ENCODE measurements at regions of chr1 and their contacts with region 1.

Region 1: DNA sequence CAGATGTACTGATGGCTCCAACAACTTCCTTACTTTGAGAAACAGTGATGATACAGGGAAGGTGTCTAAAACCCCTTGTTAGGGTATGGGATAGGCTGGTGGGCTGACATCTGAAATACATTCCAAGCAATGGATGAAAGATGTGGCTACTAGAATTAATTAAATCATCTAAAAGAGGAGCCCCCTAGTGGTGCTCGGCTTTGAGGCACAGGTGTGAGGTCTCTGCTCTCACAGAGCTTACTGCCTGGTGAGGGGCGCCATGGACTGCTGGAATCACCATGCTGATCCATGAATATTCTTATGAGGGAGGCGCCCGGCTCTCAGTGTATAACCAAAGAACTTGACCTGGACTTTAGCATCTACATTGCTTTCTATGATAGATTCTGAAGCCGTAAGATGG is 48.5 kb downstream of the GNG4 start:
- DNase-seq: no peak
- H3K4me3 ChIP-seq: no peak overlapping the region
- H3K4me3 Mint-ChIP-seq: no peak overlapping the region
- H3K27ac ChIP-seq: no peak overlapping the region
- H3K27ac Mint-ChIP-seq: no peak overlapping the region
- H3K4me1 ChIP-seq: no peaks in the 10 kb centered on the region
- H3K4me1 Mint-ChIP-seq: no peaks in the 10 kb centered on the region
- H3K27me3 ChIP-seq: no peaks in the 10 kb centered on the region
- H3K27me3 Mint-ChIP-seq: no peaks in the 10 kb centered on the region

Region 2: DNA sequence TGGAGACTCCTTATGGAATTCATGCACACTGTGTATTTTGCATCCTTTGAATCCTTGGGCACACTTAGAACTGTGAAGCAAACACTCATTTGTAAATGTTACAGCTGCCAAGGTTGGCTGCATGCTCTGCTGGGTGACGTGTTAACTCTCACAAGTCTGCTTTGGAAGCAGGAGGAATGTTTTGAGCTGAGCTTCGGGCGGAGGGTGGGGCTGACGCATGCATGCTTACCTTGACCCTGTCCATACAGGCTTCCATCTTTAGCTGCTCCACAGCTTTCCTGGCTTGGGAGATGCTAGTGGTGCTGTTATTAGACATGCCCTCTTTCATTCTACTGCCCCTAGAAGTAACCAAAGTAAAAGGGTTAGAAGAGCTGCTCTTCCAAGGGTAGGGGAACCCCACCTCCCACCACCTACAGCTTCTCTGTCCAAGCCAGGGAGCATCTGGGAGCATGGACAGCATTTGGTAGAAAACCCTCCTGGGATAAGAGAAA is 17.5 kb before region 1 on chr1:
- CTCF ChIA-PET with region 1: interaction called, 10 read pairs
- POLR2A ChIA-PET with region 1: no interaction called
- intact Hi-C with region 1: no loop called
- DNase-seq: no peak
- H3K4me3 ChIP-seq: no peak overlapping the region
- H3K4me3 Mint-ChIP-seq: no peak overlapping the region
- H3K27ac ChIP-seq: no peak overlapping the region
- H3K27ac Mint-ChIP-seq: no peak overlapping the region
- H3K4me1 ChIP-seq: no peaks in the 10 kb centered on the region
- H3K4me1 Mint-ChIP-seq: no peaks in the 10 kb centered on the region
- H3K27me3 ChIP-seq: no peaks in the 10 kb centered on the region
- H3K27me3 Mint-ChIP-seq: peaks cover 4 to 12% of the 10 kb centered on the region in 2 donors

Region 3: GRCh38 chr1:236099355-236099974 is 498.4 kb after region 1 on chr1:
- CTCF ChIA-PET with region 1: no interaction called
- POLR2A ChIA-PET with region 1: no interaction called
- intact Hi-C with region 1: no loop called
- DNase-seq: no peak
- H3K4me3 ChIP-seq: no peak overlapping the region
- H3K4me3 Mint-ChIP-seq: no peak overlapping the region
- H3K27ac ChIP-seq: no peak overlapping the region
- H3K27ac Mint-ChIP-seq: no peak overlapping the region
- H3K4me1 ChIP-seq: no peaks in the 10 kb centered on the region
- H3K4me1 Mint-ChIP-seq: peaks cover 4 to 15% (median 6%) of the 10 kb centered on the region in 4 donors
- H3K27me3 ChIP-seq: no peaks in the 10 kb centered on the region
- H3K27me3 Mint-ChIP-seq: peaks cover 4 to 16% of the 10 kb centered on the region in 2 donors